Activated CD4-positive, alpha-beta memory T cell treated with anti-CD3 and anti-CD28 coated beads, Interleukin-2, amount 10 ng/mL, durations not matched to agents 7 days and 5 days (primary cell): ENCODE measurements at regions of chr10 and their contacts with region 1.

Region 1: DNA sequence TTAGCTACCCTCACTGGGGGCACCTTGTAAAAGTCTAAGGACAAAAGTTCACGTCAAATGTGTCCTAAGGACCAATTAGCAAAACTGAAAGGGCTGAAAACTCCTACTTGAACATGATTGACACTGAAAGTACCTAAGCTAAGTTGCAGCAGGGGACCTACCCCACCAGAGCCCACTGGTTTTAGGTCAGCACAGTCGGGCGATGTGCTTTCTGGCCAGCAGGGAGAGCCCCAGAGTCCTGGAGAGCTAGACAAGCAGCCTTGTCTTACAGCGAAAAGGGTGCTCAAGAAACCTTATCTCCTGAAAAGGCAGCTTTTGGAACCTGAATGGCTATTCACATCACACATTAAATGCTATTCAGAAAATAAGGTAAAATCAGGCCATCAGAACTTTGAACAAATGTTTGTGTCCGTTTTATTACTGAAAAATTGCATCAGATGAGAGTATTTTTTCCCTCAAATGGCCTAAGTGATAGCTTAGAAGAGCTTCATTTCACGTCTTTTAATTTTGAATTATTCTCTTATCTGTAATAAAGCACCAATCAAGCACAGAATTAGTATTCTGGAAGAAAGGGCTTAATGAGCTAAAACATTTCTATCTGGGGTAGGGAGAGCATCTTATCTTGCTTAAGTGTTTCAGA is 52.2 kb upstream of the MKI67 start:
- DNase-seq: peak; percentile 66
- H3K4me3 Mint-ChIP-seq: no peak overlapping the region
- H3K27ac Mint-ChIP-seq: no peak overlapping the region
- H3K4me1 Mint-ChIP-seq: peaks cover 41% of the 10 kb centered on the region
- H3K27me3 Mint-ChIP-seq: peaks cover 9% of the 10 kb centered on the region

Region 2: DNA sequence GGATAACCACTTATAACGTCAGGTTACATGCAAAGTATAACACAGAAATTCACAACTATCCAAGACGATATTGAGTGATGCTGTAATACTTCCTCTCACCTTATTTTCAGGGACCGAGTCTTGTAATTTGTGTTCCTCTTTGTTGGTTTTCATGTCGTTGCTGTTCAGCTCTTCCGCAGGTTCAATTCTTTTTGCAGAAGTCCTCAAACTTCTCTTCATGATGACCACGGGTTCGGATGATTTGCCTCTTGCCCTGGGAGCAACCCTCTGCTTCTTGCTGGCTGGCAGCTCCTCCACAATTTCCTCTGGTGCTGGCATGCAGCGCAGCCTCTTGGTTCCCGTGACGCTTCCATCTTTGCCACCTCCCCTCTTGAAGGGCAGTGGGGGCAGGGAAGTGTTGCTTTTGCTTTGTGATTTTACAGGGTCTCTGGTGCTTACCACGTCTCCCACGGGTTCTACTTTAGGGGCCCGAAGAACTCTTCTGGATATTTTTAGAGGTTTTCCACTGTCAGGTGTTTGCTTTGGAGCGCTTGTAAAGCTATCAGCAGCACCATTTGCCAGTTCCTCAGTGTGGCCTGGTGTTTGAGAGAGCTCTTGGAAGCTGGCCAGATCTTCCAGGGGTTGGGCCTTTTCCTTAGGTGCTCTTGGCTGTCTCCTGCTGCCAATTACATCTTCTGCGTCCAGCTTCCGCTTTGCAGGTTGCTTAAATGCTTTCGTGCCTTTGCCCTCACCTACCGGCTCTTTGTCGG is 75.8 kb before region 1 on chr10:
- CTCF ChIA-PET with region 1: no interaction called
- POLR2A ChIA-PET with region 1: no interaction called
- DNase-seq: no peak
- H3K4me3 Mint-ChIP-seq: no peak overlapping the region
- H3K27ac Mint-ChIP-seq: peak overlapping the region; percentile 53
- H3K4me1 Mint-ChIP-seq: peaks cover 38% of the 10 kb centered on the region
- H3K27me3 Mint-ChIP-seq: no peaks in the 10 kb centered on the region

Region 3: GRCh38 chr10:128167926-128168520 is 10.4 kb before region 1 on chr10:
- CTCF ChIA-PET with region 1: interaction called, 11 read pairs
- POLR2A ChIA-PET with region 1: interaction called, 3 read pairs
- DNase-seq: no peak
- H3K4me3 Mint-ChIP-seq: no peak overlapping the region
- H3K27ac Mint-ChIP-seq: no peak overlapping the region
- H3K4me1 Mint-ChIP-seq: no peaks in the 10 kb centered on the region
- H3K27me3 Mint-ChIP-seq: peaks cover 32% of the 10 kb centered on the region

Region 4: DNA sequence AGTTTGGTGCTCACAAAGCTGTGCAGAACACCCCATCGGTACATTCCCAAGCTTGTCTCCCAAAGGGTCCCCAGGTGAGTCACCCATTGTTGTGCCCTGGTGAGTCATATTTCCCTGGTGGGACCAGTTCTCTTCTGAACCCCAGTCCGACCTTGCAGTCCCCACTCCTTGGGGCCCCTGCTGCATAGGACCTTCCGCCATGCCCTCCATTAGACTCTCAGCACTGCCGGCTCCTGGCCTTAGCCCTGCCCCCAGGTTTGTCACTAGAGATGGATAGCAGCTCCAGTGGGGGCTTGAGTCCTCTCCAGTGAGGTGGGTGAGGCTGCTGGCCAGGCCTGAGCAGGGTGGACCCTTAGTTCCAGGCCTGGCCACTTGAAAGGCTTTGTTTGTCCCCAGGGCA is 28.2 kb after region 1 on chr10:
- CTCF ChIA-PET with region 1: interaction called, 205 read pairs
- POLR2A ChIA-PET with region 1: interaction called, 21 read pairs
- DNase-seq: no peak
- H3K4me3 Mint-ChIP-seq: no peak overlapping the region
- H3K27ac Mint-ChIP-seq: no peak overlapping the region
- H3K4me1 Mint-ChIP-seq: peaks cover 14% of the 10 kb centered on the region
- H3K27me3 Mint-ChIP-seq: peaks cover 2% of the 10 kb centered on the region

Region 5: GRCh38 chr10:128211953-128212727 is 33.7 kb after region 1 on chr10:
- CTCF ChIA-PET with region 1: interaction called, 205 read pairs
- POLR2A ChIA-PET with region 1: interaction called, 21 read pairs
- DNase-seq: peak; percentile 87
- H3K4me3 Mint-ChIP-seq: peak overlapping the region; percentile 73
- H3K27ac Mint-ChIP-seq: peak overlapping the region; percentile 74
- H3K4me1 Mint-ChIP-seq: peaks cover 20% of the 10 kb centered on the region
- H3K27me3 Mint-ChIP-seq: peaks cover 1% of the 10 kb centered on the region